AG04450 (cell line): ENCODE measurements at regions of chr5 and their contacts with region 1.

Region 1: DNA sequence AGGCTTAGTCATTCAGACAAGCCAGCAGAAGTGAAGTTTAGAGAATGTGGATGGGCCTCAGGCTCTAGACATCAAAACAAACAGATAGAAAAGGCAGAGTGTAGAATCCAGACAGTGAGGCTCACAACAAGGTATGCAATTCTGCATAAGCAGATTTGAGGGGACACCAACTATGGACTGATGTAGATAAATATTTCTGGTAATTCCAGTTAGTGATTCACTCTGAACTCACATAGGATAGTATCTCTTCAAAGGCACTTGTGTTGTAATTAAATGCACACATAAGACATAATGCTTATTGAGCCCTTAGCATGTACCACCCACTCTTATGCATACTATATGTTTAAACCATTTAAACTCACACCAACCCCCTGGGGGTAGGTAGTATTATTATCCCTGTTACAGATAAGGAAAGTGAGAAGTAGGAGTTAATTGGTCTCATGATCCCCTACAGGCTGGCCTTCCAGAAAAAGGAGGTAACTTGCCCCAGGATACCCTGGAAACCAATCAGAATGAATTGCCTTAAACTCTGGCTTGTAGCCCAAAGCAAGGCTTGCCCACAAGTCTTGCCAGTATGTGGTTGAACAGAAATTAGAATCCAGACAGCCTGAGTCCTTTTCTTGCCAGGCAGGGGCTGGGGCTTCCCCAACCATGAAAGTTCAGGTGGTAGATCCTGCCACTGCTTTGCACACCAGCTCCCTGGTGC is 39.5 kb upstream of the HSPB3 start:
- DNase-seq: no peak
- H3K4me3 ChIP-seq: no peak overlapping the region
- H3K27ac ChIP-seq: no peak overlapping the region
- H3K27me3 ChIP-seq: peaks cover 15% of the 10 kb centered on the region
- CTCF ChIP-seq: no peak

Region 2: GRCh38 chr5:54401515-54401914 is 14.5 kb before region 1 on chr5:
- CTCF ChIA-PET with region 1: interaction called, 12 read pairs
- POLR2A ChIA-PET with region 1: no interaction called
- DNase-seq: no peak
- H3K4me3 ChIP-seq: no peak overlapping the region
- H3K27ac ChIP-seq: no peak overlapping the region
- H3K27me3 ChIP-seq: peaks cover 14% of the 10 kb centered on the region
- CTCF ChIP-seq: no peak